Sigmoid colon (tissue), 7 donors: ENCODE measurements at regions of chr5 and their contacts with region 1.

Region 1: GRCh38 chr5:51382763-51383490 is at the start of gene ISL1:
- DNase-seq: peak; percentile 90
- H3K4me3 ChIP-seq: peak within 1 kb of the TSS; percentile 52 to 68 (median 56)
- H3K27ac ChIP-seq: peak within 1 kb of the TSS in 3 of 4 donors; percentile 69 to 86 (median 83)
- H3K4me1 ChIP-seq: peaks cover 0 to 21% (median 10%) of the 10 kb centered on the region in 4 donors
- H3K27me3 ChIP-seq: peaks cover 0 to 95% (median 10%) of the 10 kb centered on the region in 3 donors
- CTCF ChIP-seq: no peak
- EP300 ChIP-seq: no peak
- POLR2A ChIP-seq: peak; percentile 72 to 84
- total RNA-seq, gene ISL1: 0.81 to 1.2 (median 1.1) TPM

Region 2: GRCh38 chr5:51416149-51416548 is 33.2 kb after region 1 on chr5:
- intact Hi-C with region 1: loop called (anchors 5 kb)
- DNase-seq: no peak
- H3K4me3 ChIP-seq: no peak overlapping the region
- H3K27ac ChIP-seq: no peak overlapping the region
- H3K4me1 ChIP-seq: no peaks in the 10 kb centered on the region
- H3K27me3 ChIP-seq: no peaks in the 10 kb centered on the region
- CTCF ChIP-seq: no peak
- EP300 ChIP-seq: no peak
- POLR2A ChIP-seq: no peak